Colonic mucosa (tissue), 4 donors: ENCODE measurements at regions of chr20 and their contacts with region 1.

Region 1: DNA sequence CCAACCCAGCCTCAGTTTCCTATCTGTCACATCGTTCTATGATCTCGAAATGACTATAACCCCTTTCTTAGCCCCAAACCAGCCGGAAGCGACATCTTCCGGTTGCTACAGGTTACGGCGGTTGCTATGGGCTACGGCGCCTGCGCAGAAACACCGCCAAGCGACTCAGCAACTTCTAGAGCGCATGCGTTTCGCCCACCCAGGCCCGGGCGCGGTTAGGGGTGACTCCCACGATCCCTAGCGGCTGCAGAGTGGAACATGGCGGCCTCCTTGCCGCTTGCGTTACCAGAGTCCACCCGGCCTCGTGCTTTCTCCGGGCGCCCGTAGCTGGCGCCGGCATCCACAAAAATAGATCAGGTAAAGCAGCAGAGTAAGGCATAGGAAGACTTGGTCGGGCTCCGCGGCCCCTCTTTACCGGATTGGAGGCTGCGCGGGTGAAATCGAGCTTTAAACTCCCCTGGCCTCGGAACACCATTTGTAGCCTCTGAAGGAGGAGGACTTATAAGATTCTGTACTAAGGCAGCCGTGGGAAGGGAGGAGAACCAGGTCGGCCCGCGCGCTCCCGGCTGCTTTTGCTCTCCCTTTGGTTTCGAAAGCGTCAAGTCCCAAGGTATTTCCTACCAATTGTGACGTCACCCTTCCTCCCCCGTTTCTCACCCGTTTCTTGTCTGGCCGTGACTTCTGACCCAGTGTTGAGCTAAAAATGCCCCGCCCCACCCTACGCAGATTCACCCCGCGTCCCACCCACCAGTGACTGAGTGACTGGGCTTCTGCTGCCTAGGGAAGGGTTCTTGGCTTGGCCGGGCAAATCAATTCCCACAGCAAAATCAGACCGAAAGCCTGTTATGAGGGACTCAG is 3.5 kb downstream of the SDCBP2 start:
- DNase-seq: peak; percentile 98
- H3K4me3 ChIP-seq: peak overlapping the region; percentile 70
- H3K27ac ChIP-seq: peak overlapping the region; percentile 97
- H3K4me1 ChIP-seq: peaks cover 2% of the 10 kb centered on the region
- H3K27me3 ChIP-seq: no peaks in the 10 kb centered on the region
- CTCF ChIP-seq: no peak

Region 2: DNA sequence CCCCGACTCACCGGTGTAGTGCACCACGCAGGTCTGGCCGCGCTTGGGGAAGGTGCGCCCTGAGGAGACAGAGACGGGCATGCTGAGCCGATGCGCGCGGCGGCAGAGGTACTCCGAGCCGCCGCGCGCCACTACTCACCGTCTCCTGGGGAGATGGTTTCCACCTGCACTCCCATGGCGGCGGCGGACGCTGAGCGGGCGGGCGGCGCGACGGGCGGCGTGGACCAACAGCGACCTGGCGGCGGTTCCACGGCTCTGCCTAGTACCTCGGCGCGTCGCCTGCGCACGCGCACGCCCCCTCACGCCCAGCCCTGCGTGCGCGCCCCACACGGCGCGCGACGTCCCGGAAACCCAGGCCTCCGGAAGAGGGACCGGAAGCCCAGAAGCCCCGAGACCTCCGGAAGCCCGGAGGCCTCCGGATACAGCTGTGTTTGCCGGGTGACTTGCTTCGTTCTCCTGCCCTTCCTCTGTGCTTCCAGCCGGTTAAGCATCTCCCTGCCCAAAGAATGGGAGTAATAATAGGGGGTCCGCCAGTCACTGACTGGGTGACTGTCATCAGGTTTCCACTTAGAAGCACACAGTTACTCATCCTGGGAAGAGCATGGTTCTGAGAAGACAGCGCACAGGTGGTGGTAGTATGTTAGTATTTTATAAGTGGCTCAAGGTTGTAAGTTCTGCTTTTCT is 67.6 kb after region 1 on chr20 and contains the start of gene FKBP1A:
- intact Hi-C with region 1: loop called (anchors 5 kb)
- DNase-seq: peak; percentile 93
- H3K4me3 ChIP-seq: peak within 1 kb of the TSS; percentile 81
- H3K27ac ChIP-seq: peak within 1 kb of the TSS; percentile 79
- H3K4me1 ChIP-seq: peaks cover 14% of the 10 kb centered on the region
- H3K27me3 ChIP-seq: no peaks in the 10 kb centered on the region
- CTCF ChIP-seq: peak; percentile 17
- total RNA-seq, gene FKBP1A: 307 to 310 TPM